IMR-90 (cell line): ENCODE measurements at regions of chr7 and their contacts with region 1.

Region 1: DNA sequence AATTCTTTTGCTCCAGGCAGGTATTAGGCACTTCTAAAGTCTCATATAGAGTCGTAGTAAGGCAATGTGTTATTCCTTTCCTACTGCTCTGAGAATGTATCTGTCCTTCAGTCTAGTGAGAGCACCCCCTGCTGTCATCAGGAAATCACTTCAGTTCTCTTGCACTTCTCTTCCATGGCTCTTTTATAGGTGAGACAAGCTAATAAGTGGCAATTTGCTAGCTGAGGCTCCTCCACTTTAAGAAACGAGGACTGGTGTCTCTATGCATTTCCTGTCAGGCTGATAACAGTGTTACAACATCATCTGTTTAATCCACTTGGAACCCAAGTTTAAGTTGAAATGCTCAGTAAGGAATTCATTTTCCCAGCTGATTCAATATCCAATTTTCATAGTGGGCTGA is 350.6 kb downstream of the TFEC start:
- DNase-seq: peak; percentile 59
- ATAC-seq: peak; percentile 61; the same call in 1 of the 2 replicates
- H3K4me3 ChIP-seq: no peak overlapping the region
- H3K27ac ChIP-seq: no peak overlapping the region
- H3K4me1 ChIP-seq: no peaks in the 10 kb centered on the region
- H3K27me3 ChIP-seq: no peaks in the 10 kb centered on the region
- CTCF ChIP-seq: peak; percentile 53
- POLR2A ChIP-seq: no peak
- RAD21 ChIP-seq: peak; percentile 58

Region 2: GRCh38 chr7:115087437-115087836 is 592.5 kb before region 1 on chr7:
- CTCF ChIA-PET with region 1: no interaction called
- POLR2A ChIA-PET with region 1: no interaction called
- dilution Hi-C with region 1: no loop called
- in situ Hi-C with region 1: no loop called
- intact Hi-C with region 1: loop called (anchors 5 kb)
- DNase-seq: peak; percentile 92
- ATAC-seq: peak; percentile 85
- H3K4me3 ChIP-seq: no peak overlapping the region
- H3K27ac ChIP-seq: no peak overlapping the region
- H3K4me1 ChIP-seq: peaks cover 3% of the 10 kb centered on the region; the same call in 1 of the 2 replicates
- H3K27me3 ChIP-seq: no peaks in the 10 kb centered on the region
- CTCF ChIP-seq: no peak
- POLR2A ChIP-seq: no peak
- RAD21 ChIP-seq: no peak

Region 3: DNA sequence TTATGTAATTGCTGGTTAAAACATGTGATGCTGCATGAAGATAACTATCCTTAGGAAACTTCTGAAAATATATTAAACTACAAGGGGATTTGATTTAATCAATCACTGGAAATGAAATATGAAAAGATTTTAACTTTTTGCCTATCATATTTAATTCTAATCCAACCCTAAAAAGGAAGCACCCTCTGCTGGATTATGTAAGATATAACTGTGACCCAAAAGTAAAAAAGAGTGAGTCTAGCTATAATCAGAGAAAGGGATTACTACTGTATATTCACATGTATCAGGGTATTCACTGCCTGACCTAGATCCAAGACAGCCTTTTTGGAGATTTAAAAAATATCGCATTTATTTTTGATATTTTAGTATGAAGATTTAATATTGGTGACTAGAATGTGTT is 462.6 kb before region 1 on chr7:
- CTCF ChIA-PET with region 1: no interaction called
- POLR2A ChIA-PET with region 1: no interaction called
- dilution Hi-C with region 1: no loop called
- in situ Hi-C with region 1: no loop called
- intact Hi-C with region 1: loop called (anchors 10 kb)
- DNase-seq: no peak
- ATAC-seq: no peak
- H3K4me3 ChIP-seq: no peak overlapping the region
- H3K27ac ChIP-seq: no peak overlapping the region
- H3K4me1 ChIP-seq: peaks cover 3% of the 10 kb centered on the region
- H3K27me3 ChIP-seq: no peaks in the 10 kb centered on the region
- CTCF ChIP-seq: peak; percentile 28; the same call in 1 of the 2 replicates
- POLR2A ChIP-seq: no peak
- RAD21 ChIP-seq: peak; percentile 32

Region 4: GRCh38 chr7:115356139-115356746 is 323.7 kb before region 1 on chr7:
- CTCF ChIA-PET with region 1: no interaction called
- POLR2A ChIA-PET with region 1: no interaction called
- dilution Hi-C with region 1: no loop called
- in situ Hi-C with region 1: no loop called
- intact Hi-C with region 1: loop called (anchors 5 kb)
- DNase-seq: peak; percentile 44
- ATAC-seq: no peak
- H3K4me3 ChIP-seq: no peak overlapping the region
- H3K27ac ChIP-seq: no peak overlapping the region
- H3K4me1 ChIP-seq: peaks cover 4% of the 10 kb centered on the region; the same call in 1 of the 2 replicates
- H3K27me3 ChIP-seq: no peaks in the 10 kb centered on the region
- CTCF ChIP-seq: peak; percentile 48
- POLR2A ChIP-seq: no peak
- RAD21 ChIP-seq: peak; percentile 42